Activated CD4-positive, alpha-beta T cell treated with anti-CD3 and anti-CD28 coated beads for 36 hours (primary cell): ENCODE measurements at regions of chr14 and their contacts with region 1.

Region 1: DNA sequence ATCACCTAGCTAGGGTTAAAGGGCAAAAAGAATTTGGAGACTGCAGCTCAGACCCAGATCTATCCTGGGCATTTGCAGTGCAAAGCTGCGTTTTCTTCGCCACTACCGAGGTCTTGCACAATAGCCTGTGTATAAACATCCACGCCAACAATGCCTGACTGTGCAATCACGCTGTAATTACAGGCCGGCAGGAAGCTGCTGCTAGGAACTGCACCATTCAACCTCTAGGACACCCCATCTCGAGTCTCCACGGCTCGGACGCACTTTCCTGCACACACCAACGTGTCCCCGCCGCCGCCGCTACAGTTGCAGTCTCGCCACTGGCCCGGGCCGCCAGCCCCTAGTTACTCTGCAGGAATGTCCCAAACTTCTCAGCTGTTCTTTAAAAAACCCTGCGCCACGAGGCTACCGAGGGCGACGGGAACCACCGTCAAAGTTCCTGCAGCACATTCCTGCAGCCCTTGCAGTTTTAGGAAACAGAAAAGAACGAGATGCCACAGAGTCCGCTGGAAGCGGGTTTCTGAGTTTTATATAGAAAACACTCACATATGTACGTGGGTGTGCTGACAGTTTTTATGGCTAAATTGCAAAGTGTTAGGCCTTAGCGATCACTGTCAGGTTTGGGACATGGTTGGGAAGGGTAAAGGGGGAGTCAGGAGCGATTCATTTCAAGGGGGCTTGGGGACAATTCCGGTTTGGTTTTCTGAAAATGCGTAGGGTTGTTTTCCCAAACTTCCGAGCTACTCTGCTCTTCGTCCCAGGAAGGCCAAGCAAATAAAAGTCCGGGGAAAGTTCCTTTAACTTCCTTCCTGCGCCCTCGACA is 65.5 kb upstream of the PTGR2 start:
- DNase-seq: peak; percentile 81
- ATAC-seq: peak; percentile 67
- H3K4me3 Mint-ChIP-seq: peak overlapping the region; percentile 94
- H3K27ac Mint-ChIP-seq: peak overlapping the region; percentile 93
- H3K4me1 Mint-ChIP-seq: peaks cover 56% of the 10 kb centered on the region
- H3K27me3 Mint-ChIP-seq: no peaks in the 10 kb centered on the region

Region 2: GRCh38 chr14:73696466-73697400 is 89.4 kb before region 1 on chr14:
- CTCF ChIA-PET with region 1: interaction called, 5 read pairs
- POLR2A ChIA-PET with region 1: no interaction called
- intact Hi-C with region 1: loop called in 1 of 2 experiments (anchors 1 kb)
- DNase-seq: no peak
- ATAC-seq: peak; percentile 87
- H3K4me3 Mint-ChIP-seq: peak overlapping the region; percentile 46
- H3K27ac Mint-ChIP-seq: peak overlapping the region; percentile 92
- H3K4me1 Mint-ChIP-seq: peaks cover 50% of the 10 kb centered on the region
- H3K27me3 Mint-ChIP-seq: no peaks in the 10 kb centered on the region

Region 3: DNA sequence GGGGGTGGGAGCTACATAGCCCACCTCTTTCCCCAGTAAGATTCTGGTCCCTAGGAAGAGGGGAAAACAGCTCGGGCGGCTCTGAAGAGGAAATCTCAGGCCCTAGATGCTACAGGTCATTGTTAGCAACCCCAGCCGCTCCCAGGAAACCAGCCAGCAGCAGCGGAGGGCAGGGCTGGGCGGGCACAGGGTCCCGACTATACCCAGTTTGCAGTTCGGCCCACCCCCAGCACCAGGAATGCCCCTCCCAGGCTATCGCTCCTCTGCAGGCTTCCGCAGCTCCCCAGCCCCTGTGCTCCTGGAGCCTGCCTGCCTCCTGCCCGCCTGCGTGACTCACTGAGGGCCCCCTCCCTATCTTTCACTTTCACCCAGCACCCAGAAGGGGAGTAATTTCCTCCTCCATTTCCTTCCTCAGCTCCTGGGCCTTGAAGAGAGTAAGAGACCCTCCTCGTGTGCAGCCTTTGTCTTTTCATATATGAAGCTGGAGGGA is 44.7 kb before region 1 on chr14:
- CTCF ChIA-PET with region 1: interaction called, 8 read pairs
- POLR2A ChIA-PET with region 1: interaction called, 4 read pairs
- intact Hi-C with region 1: loop called in 1 of 2 experiments (anchors 1 kb)
- DNase-seq: peak; percentile 85
- ATAC-seq: peak; percentile 80
- H3K4me3 Mint-ChIP-seq: peak overlapping the region; percentile 66
- H3K27ac Mint-ChIP-seq: peak overlapping the region; percentile 82
- H3K4me1 Mint-ChIP-seq: peaks cover 65% of the 10 kb centered on the region
- H3K27me3 Mint-ChIP-seq: no peaks in the 10 kb centered on the region

Region 4: DNA sequence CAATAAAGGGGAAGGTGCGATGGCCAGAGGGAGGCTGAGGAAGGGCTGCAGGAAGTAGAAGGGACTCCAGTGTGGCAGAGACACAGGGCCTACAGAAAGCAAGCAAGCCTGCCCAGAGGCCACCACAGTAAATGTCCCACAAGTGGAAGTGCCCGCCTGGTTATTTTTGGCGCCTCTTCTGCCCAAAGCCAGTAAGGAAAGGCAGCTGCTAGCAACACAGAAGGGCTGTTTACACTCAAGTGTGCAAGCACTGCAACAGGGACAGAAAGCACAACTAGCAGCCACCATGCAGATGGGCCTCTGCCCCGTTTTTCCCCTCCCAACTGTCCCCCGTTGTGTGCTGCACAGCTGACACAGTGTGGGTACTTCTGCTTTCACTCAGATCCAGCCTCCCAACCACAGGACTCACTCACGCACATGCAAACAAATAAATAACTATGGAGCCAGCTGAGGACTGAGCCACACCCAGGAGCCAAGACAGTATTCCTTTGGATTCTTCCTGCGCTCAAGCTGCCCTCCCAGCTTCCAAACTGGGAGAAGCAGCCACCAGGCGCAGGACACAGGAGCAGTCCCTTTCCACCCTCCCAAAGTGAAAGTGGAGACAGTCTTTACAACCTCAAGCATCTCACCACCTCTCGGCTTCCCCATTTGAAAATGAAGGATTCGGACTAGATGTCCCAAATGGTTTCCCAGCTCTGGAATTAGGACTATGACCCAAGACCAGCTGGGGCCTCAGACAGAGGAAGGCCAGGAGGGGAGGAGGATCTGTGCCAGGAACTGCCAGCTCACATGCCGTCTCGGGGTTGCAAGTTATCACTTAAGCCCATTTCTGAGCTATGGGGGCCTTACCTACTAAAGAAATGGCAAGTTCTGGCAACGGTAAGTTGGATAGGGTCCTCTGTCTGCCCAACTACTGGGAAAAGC is 31.9 kb before region 1 on chr14:
- CTCF ChIA-PET with region 1: interaction called, 68 read pairs
- POLR2A ChIA-PET with region 1: interaction called, 43 read pairs
- intact Hi-C with region 1: loop called in 1 of 2 experiments (anchors 5 kb)
- DNase-seq: peak; percentile 80
- ATAC-seq: peak; percentile 45
- H3K4me3 Mint-ChIP-seq: peak overlapping the region; percentile 84
- H3K27ac Mint-ChIP-seq: peak overlapping the region; percentile 94
- H3K4me1 Mint-ChIP-seq: peaks cover 87% of the 10 kb centered on the region
- H3K27me3 Mint-ChIP-seq: no peaks in the 10 kb centered on the region

Region 5: DNA sequence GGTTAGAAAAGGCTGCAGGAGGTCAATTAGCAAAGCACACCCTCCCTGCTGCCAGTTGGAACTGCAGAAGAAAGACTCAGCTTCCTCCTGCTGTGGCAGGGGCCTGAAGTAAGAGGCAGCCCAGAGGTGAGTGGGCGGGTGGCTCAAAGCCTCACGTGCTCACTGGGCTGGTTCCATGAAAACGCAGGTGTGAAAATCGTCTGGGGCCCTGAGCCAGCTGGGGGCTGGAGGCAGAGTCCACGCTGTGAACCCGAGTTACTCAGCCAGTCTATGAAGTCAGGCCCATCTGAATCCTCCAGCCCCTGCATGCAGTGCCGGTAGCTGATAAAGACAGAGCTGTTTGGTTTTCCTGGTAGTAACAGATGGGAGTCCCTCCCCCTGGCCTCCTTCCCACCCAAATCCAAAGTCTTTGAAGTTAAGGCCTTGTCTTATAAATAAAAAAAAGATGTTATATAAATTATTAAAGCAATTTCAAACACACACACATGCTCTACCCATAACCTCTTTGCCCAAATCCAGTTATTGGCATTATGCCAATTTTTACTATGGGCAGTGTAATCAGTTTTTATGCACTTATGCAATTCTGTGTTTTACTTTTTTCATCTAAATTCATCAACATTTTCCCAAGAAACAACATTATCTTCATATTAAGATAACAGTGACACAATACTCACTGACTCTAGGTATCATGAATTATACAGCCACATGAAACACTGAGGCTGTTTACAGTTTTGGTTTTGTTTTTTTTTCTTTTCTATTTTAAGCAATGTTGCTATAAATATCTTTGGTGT is 14.0 kb before region 1 on chr14:
- CTCF ChIA-PET with region 1: interaction called, 7 read pairs
- POLR2A ChIA-PET with region 1: interaction called, 10 read pairs
- intact Hi-C with region 1: loop called (anchors 1 to 2 kb)
- DNase-seq: peak; percentile 90
- ATAC-seq: peak; percentile 80
- H3K4me3 Mint-ChIP-seq: peak overlapping the region; percentile 12
- H3K27ac Mint-ChIP-seq: peak overlapping the region; percentile 89
- H3K4me1 Mint-ChIP-seq: peaks cover 73% of the 10 kb centered on the region
- H3K27me3 Mint-ChIP-seq: no peaks in the 10 kb centered on the region

Region 6: GRCh38 chr14:75032939-75033338 is 1246.9 kb after region 1 on chr14:
- CTCF ChIA-PET with region 1: no interaction called
- POLR2A ChIA-PET with region 1: no interaction called
- intact Hi-C with region 1: no loop called
- DNase-seq: no peak
- ATAC-seq: no peak
- H3K4me3 Mint-ChIP-seq: no peak overlapping the region
- H3K27ac Mint-ChIP-seq: no peak overlapping the region
- H3K4me1 Mint-ChIP-seq: no peaks in the 10 kb centered on the region
- H3K27me3 Mint-ChIP-seq: no peaks in the 10 kb centered on the region